Activated T-helper 1 cell treated with anti-CD3 and anti-CD28 coated beads, Interleukin-12 subunit alpha, Interleukin-12 subunit beta, Interleukin-2, Interleukin-4 antibody, amounts not matched to agents 30 ng/mL and 10 ng/mL and 1 ng/mL, durations not matched to agents 14 hours and 24 hours and 36 hours (primary cell): ENCODE measurements at regions of chr1 and their contacts with region 1.

Region 1: DNA sequence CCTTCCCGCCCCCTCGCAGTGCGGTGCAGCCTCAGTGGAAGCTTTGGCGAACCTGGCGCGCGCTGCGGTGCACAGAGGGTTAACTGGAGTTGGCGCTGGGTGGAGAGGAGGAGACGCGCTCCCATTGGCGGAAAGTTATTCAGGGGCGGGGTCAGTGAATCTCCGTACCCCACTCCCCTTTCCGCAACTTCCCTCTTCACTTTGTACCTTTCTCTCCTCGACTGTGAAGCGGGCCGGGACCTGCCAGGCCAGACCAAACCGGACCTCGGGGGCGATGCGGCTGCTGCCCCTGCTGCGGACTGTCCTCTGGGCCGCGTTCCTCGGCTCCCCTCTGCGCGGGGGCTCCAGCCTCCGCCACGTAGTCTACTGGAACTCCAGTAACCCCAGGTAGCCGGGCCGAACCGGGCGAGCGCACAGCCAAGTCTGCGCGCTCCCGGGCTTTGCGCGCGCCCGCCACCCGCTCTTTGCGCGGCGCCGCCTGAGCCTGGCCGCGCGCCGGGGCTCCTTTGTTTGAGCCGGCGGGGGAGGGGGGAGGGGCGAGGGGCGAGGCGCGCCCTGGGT is at the start of gene EFNA4:
- DNase-seq: peak; percentile 83
- H3K4me3 Mint-ChIP-seq: peak within 1 kb of the TSS; percentile 93
- H3K27ac Mint-ChIP-seq: peak within 1 kb of the TSS; percentile 79
- H3K4me1 Mint-ChIP-seq: peaks cover 31% of the 10 kb centered on the region
- H3K27me3 Mint-ChIP-seq: no peaks in the 10 kb centered on the region
- total RNA-seq, gene EFNA4: 5.7 and 6.8 TPM in 2 replicates

Region 2: GRCh38 chr1:154669464-154670282 is 394.0 kb before region 1 on chr1:
- intact Hi-C with region 1: loop called (anchors 1 kb)
- DNase-seq: peak; percentile 64
- H3K4me3 Mint-ChIP-seq: no peak overlapping the region
- H3K27ac Mint-ChIP-seq: no peak overlapping the region
- H3K4me1 Mint-ChIP-seq: peaks cover 17% of the 10 kb centered on the region
- H3K27me3 Mint-ChIP-seq: peaks cover 2% of the 10 kb centered on the region

Region 3: DNA sequence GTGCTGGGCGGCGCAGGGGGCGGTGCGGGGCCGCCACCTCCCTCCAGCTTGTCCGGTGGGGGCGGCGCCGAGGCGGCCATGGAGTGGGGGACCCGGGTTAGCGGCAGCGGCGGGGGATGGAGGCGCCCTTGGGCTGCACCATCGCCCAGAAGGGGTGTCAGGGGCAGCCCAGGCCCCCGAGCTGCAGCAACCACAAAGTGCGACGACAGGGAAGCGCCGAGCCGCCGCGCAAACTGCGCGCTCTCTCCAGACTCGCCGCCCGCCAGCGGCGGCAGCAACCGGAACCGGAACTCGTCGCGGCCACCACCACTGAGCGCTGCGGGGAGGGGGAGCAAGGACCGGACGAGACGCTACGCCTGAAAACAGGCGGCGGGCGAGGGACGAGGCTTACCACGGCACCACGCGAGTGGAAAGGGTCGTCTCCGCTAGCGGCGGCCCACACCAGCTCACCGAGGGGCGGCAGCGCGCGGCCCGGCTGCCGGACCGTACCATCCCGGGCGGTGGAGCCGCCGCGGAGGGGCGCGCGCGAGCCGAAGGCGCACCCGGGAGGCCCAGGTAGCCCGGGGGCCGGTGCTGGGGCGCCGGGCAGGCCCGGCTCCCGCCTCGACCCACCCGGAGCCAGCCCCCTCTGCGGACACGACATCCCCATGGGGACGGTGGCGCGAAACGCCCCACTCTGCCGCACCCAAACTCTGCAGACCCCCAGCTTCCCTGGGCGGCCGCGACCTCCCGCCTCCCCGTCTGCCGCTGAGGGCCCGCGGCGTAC is 102.0 kb before region 1 on chr1 and contains the start of gene PYGO2:
- intact Hi-C with region 1: loop called (anchors 1 kb)
- DNase-seq: peak; percentile 82
- H3K4me3 Mint-ChIP-seq: peak within 1 kb of the TSS; percentile 96
- H3K27ac Mint-ChIP-seq: peak within 1 kb of the TSS; percentile 93
- H3K4me1 Mint-ChIP-seq: peaks cover 36% of the 10 kb centered on the region
- H3K27me3 Mint-ChIP-seq: peaks cover 2% of the 10 kb centered on the region
- total RNA-seq, gene PYGO2: 34.7 and 35.0 TPM in 2 replicates

Region 4: DNA sequence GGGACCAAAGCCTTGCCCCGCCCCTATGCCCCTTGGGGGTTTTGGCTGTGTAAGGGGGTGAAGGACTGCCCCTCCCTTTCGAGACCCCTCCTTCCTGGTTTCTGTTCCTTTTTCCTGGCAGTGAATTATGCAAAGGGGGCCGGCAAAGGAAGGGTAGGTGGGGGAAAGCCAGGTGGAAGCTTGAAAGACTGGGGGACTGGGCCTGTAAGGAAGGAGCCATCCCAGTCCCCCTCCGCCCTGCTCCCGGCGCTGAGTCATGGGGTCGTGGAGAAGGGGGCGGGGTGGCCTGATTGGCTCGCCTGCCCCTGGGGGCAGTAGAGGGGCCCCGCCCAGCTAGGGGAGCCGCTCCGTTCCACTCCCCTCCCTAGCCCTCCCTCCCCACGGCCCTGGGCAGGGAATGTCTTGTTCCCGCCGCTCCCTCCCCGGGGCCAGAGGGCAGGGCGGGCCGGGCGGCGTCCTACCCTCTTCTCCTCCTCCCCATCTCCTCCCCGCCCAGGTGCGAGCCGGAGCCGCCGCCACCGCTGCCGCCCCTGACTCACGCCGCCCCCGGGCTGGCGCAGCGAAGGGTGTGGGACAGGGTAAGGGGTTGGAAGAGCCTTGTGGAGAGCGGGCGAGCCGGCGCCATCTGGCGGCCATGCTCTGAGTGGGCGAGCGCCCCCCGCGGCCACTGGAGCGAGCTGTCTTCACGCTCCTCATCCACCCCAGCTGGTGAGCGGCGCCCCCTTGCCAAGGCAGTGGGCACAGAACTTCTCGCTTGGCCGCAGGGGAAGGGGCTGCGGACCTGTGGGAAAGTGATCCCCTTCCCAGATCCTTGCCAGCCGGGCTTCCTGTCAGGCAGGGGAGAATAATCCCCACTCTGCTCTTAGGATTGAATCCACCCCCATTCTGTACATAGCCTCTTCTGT is 46.3 kb before region 1 on chr1:
- intact Hi-C with region 1: loop called (anchors 1 kb)
- DNase-seq: peak; percentile 81
- H3K4me3 Mint-ChIP-seq: peak overlapping the region; percentile 69
- H3K27ac Mint-ChIP-seq: peak overlapping the region; percentile 7
- H3K4me1 Mint-ChIP-seq: peaks cover 54% of the 10 kb centered on the region
- H3K27me3 Mint-ChIP-seq: no peaks in the 10 kb centered on the region

Region 5: DNA sequence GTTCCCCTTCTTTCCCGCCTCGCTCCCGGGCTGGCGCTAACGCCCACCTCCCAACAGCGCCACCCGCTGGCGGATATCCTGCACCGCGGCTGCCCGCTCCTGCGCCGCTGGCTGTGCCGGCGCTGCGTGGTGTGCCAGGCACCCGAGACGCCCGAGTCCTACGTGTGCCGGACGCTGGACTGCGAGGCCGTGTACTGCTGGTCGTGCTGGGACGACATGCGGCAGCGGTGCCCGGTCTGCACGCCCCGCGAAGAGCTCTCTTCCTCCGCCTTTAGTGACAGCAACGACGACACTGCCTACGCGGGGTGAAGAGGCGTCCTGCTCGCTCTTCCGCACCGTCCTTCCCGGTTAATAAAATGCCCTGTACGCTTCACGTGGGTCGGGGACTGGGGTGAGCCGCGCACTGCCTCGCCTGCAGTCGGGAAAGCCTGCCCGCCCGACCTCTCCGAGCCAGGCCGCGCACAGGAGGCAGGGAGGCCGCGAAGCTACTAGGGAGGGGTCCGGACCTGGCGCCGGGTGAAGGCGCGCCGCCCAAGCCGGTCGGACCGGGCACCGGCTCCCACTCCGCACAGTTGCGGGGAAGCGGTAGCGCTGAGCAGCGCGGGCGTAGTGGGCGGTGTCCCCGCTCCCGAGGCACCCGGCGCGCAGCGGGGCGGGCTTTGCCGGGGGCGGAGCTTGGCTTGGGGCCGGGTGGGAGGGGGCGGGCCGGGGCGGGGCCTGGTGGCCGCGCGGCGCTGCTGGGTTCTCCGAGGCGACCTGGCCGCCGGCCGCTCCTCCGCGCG is 12.9 kb before region 1 on chr1 and contains the start of gene ADAM15:
- intact Hi-C with region 1: loop called (anchors 1 kb)
- DNase-seq: peak; percentile 79
- H3K4me3 Mint-ChIP-seq: peak within 1 kb of the TSS; percentile 88
- H3K27ac Mint-ChIP-seq: peak within 1 kb of the TSS; percentile 88
- H3K4me1 Mint-ChIP-seq: peaks cover 28% of the 10 kb centered on the region
- H3K27me3 Mint-ChIP-seq: no peaks in the 10 kb centered on the region
- total RNA-seq, gene ADAM15: 82.9 and 86.8 TPM in 2 replicates

Region 6: DNA sequence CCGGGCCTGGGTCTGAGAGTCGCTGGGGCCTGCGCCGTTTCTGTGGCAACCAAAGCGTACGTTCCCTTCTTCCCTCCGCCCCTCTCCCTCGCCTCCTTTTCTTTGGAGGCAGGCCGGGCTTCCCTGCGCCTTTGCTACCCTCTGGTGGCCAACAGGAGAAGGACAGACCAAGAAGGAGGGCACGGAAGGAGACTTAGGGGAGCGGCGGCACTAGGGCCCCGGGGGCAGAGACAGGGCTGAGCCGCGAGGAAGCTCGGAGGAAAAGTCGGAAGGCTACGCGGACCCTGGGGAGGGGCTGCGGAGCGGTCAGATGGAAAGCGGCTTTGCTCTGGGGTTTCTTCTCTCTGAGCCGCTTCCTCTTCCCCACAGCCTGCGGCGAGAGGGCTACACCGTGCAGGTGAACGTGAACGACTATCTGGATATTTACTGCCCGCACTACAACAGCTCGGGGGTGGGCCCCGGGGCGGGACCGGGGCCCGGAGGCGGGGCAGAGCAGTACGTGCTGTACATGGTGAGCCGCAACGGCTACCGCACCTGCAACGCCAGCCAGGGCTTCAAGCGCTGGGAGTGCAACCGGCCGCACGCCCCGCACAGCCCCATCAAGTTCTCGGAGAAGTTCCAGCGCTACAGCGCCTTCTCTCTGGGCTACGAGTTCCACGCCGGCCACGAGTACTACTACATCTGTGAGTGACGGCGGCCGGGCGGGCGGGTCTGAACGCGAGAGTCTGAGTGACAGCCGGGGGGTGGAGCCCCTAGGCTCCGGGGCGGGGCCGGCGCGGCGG is 21.3 kb after region 1 on chr1:
- intact Hi-C with region 1: loop called (anchors 1 kb)
- DNase-seq: peak; percentile 89
- H3K4me3 Mint-ChIP-seq: peak overlapping the region; percentile 88
- H3K27ac Mint-ChIP-seq: peak overlapping the region; percentile 94
- H3K4me1 Mint-ChIP-seq: peaks cover 34% of the 10 kb centered on the region
- H3K27me3 Mint-ChIP-seq: peaks cover 31% of the 10 kb centered on the region

Region 7: GRCh38 chr1:155172732-155173477 is 109.3 kb after region 1 on chr1 and contains the start of gene KRTCAP2:
- intact Hi-C with region 1: loop called (anchors 1 kb)
- DNase-seq: peak; percentile 94
- H3K4me3 Mint-ChIP-seq: peak within 1 kb of the TSS; percentile 96
- H3K27ac Mint-ChIP-seq: peak within 1 kb of the TSS; percentile 97
- H3K4me1 Mint-ChIP-seq: peaks cover 49% of the 10 kb centered on the region
- H3K27me3 Mint-ChIP-seq: no peaks in the 10 kb centered on the region
- total RNA-seq, gene KRTCAP2: 230 and 238 TPM in 2 replicates

Region 8: GRCh38 chr1:156676820-156677615 is 1613.4 kb after region 1 on chr1 and contains the start of gene NES:
- intact Hi-C with region 1: no loop called
- DNase-seq: no peak
- H3K4me3 Mint-ChIP-seq: no peak within 1 kb of the TSS
- H3K27ac Mint-ChIP-seq: no peak within 1 kb of the TSS
- H3K4me1 Mint-ChIP-seq: peaks cover 14% of the 10 kb centered on the region
- H3K27me3 Mint-ChIP-seq: peaks cover 66% of the 10 kb centered on the region
- total RNA-seq, gene NES: not detected in 2 replicates